Left cardiac atrium (tissue), 4 donors: ENCODE measurements at regions of chr2 and their contacts with region 1.

Region 1: GRCh38 chr2:235106874-235107639 is 155.2 kb downstream of the SH3BP4 start:
- DNase-seq: peak; percentile 68
- ATAC-seq: peak; percentile 82 to 87

Region 2: GRCh38 chr2:234550511-234551107 is 556.4 kb before region 1 on chr2:
- intact Hi-C with region 1: loop called (anchors 2 to 5 kb)
- DNase-seq: peak; percentile 53
- ATAC-seq: peak; percentile 80 to 83

Region 3: GRCh38 chr2:234881413-234882241 is 225.4 kb before region 1 on chr2:
- intact Hi-C with region 1: loop called in 1 of 2 experiments (anchors 5 kb)
- DNase-seq: peak; percentile 89
- ATAC-seq: peak; percentile 97 to 99

Region 4: GRCh38 chr2:235005603-235006259 is 101.3 kb before region 1 on chr2:
- intact Hi-C with region 1: loop called in 1 of 2 experiments (anchors 5 kb)
- DNase-seq: peak; percentile 68
- ATAC-seq: peak; percentile 80 to 85